Upper lobe of right lung (tissue), 1 donor: ENCODE measurements at regions of chr18 and their contacts with region 1.

Region 1: DNA sequence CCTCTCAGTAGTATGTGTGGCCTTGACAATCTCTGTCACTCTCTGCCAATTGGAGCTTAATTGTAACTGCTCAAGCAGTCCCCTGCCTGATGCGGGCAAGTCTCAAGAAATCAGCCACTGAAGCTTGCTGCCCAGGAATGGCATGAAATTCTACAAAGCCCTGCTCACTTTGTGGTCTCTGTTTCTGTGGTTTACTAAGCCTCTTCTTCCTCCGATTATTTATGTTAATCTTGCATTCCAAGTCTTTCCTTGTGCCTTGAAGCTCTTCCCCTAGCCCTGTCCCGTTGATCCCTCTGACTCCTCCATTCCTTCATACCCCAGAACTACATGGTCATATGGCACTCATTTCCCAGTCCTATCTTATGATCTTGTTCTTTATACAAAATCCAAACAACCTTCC is 489.3 kb upstream of the CHST9 start:
- DNase-seq: no peak
- ATAC-seq: no peak
- H3K4me3 ChIP-seq: no peak overlapping the region
- H3K27ac ChIP-seq: no peak overlapping the region
- H3K4me1 ChIP-seq: no peaks in the 10 kb centered on the region
- H3K27me3 ChIP-seq: no peaks in the 10 kb centered on the region
- CTCF ChIP-seq: no peak

Region 2: DNA sequence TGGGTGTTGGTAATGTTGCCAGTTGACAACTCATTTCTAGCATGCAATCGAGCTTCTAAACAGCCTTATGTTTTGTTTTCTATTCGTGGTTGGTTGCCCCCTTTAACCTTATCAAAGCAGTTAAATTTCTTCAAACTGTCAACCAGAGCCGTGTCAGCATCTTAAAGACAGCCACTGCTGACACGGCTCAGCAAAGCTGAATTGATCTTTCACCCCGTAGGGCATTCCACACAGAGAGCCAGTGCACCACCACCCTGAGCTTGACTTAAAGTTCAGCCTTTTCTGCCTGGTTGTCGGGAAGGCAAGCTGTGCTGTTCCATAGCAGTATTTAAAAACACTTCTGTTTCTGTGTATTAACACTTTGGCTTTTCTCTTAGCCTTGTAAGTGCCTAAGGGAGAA is 134.3 kb before region 1 on chr18:
- intact Hi-C with region 1: no loop called
- DNase-seq: no peak
- ATAC-seq: no peak
- H3K4me3 ChIP-seq: no peak overlapping the region
- H3K27ac ChIP-seq: no peak overlapping the region
- H3K4me1 ChIP-seq: no peaks in the 10 kb centered on the region
- H3K27me3 ChIP-seq: no peaks in the 10 kb centered on the region
- CTCF ChIP-seq: no peak

Region 3: DNA sequence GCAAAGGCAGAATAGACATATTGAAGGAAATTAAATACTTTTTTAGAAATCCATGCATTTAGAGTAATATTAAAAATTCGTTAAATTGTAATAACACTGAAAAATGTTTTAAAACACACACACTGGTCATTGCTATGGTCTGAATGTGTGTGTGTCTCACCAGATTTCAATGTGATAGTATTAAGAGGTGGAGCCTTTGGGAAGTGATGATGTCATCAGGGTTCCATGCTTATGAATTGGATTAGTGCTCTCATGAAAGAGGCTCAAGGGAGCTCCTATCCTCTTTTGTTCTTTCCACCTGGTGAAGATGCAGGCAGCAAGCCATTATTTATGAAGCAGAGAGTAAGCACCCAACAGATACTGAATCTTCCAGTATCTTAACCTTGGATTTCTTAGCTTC is 60.7 kb after region 1 on chr18:
- intact Hi-C with region 1: loop called (anchors 10 kb)
- DNase-seq: no peak
- ATAC-seq: no peak
- H3K4me3 ChIP-seq: no peak overlapping the region
- H3K27ac ChIP-seq: no peak overlapping the region
- H3K4me1 ChIP-seq: no peaks in the 10 kb centered on the region
- H3K27me3 ChIP-seq: no peaks in the 10 kb centered on the region
- CTCF ChIP-seq: no peak

Region 4: GRCh38 chr18:27860701-27861107 is 186.3 kb after region 1 on chr18:
- intact Hi-C with region 1: no loop called
- DNase-seq: no peak
- ATAC-seq: no peak
- H3K4me3 ChIP-seq: no peak overlapping the region
- H3K27ac ChIP-seq: no peak overlapping the region
- H3K4me1 ChIP-seq: no peaks in the 10 kb centered on the region
- H3K27me3 ChIP-seq: no peaks in the 10 kb centered on the region
- CTCF ChIP-seq: no peak